Activated B cell treated with CpG ODN at 0.5 μM for 24 hours (primary cell): ENCODE measurements at regions of chr10 and their contacts with region 1.

Region 1: DNA sequence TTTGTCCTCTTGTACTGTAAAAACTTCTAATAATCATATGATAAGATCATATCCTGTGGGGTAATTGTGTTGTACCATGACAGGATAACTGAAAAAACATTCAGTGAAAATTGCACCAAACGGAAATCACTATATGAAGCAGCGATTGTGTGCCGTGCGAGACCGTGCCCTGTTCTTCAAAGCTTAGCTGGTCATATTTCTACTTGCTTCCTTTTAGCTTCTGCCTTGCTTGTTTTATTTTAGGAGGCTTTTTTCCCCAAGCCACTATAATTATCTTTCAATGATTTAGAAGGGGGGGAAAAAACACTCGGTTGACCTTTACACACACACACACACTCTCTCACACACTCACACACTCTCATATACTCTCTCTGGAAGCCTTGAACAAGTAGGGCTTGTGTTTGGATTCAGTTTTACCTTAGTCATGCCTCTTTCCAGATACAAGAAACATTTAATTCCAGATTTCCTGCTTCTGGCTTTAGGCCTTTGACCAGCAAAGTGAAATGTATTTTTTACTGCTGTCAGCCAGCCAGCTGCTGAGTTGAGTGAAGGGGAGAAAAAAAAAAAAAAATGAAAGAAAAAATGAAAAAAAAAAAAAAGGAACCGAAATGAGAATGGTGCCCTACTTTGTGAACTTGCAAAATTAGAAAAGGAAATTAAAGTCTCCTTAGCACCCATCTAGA is 181.4 kb downstream of the ARID5B start:
- DNase-seq: no peak
- ATAC-seq: peak; percentile 48
- H3K4me3 Mint-ChIP-seq: peak overlapping the region; percentile 65
- H3K27ac Mint-ChIP-seq: peak overlapping the region; percentile 96
- H3K4me1 Mint-ChIP-seq: peaks cover 86% of the 10 kb centered on the region
- H3K27me3 Mint-ChIP-seq: no peaks in the 10 kb centered on the region
- CTCF ChIP-seq: no peak

Region 2: GRCh38 chr10:61896854-61897661 is 185.8 kb before region 1 on chr10:
- CTCF ChIA-PET with region 1: interaction called, 5 read pairs
- POLR2A ChIA-PET with region 1: interaction called, 58 read pairs
- intact Hi-C with region 1: loop called (anchors 1 kb)
- DNase-seq: peak; percentile 43
- ATAC-seq: peak; percentile 71
- H3K4me3 Mint-ChIP-seq: peak overlapping the region; percentile 97
- H3K27ac Mint-ChIP-seq: peak overlapping the region; percentile 98
- H3K4me1 Mint-ChIP-seq: peaks cover 37% of the 10 kb centered on the region
- H3K27me3 Mint-ChIP-seq: no peaks in the 10 kb centered on the region
- CTCF ChIP-seq: no peak

Region 3: DNA sequence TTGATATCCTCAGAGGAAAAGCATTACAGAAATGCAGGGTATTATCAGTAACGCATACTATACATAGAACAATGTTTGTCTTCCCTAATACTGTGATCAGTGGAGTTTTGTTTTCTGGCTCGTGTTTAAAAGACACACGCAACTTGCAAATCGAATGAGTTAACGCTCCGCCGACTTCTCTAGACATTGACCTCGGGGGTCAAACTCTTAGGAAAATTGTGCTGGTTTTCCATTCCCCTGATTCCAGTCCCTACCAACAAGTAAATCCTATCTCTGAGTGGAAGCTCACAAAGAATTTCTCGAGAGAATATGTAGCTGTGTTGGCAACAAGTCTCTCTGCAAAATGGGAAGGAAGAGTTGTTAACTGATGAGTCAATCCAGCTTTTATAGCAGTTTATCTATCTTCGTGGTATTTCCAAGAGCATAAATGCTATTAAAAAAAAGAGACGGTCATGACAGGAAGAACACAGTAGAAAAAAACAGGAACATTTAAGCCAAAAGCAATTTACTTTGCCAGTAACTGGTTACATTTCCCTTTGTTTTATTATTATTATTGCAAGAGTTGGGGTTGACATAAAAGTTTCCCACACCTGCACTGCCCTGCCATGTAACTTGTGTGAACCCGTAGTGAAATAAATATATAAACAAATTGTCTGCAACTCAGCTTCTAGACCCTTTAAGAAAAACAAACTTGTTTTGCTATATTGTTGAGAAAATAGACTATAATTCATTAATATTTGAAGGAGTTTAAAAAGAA is 36.9 kb before region 1 on chr10:
- CTCF ChIA-PET with region 1: interaction called, 16 read pairs
- POLR2A ChIA-PET with region 1: interaction called, 100 read pairs
- intact Hi-C with region 1: loop called (anchors 1 kb)
- DNase-seq: no peak
- ATAC-seq: peak; percentile 4
- H3K4me3 Mint-ChIP-seq: peak overlapping the region; percentile 85
- H3K27ac Mint-ChIP-seq: peak overlapping the region; percentile 93
- H3K4me1 Mint-ChIP-seq: peaks cover 100% of the 10 kb centered on the region
- H3K27me3 Mint-ChIP-seq: no peaks in the 10 kb centered on the region
- CTCF ChIP-seq: no peak

Region 4: GRCh38 chr10:62069452-62070178 is 13.3 kb before region 1 on chr10:
- CTCF ChIA-PET with region 1: interaction called, 3 read pairs
- POLR2A ChIA-PET with region 1: interaction called, 6 read pairs
- intact Hi-C with region 1: loop called (anchors 1 kb)
- DNase-seq: no peak
- ATAC-seq: no peak
- H3K4me3 Mint-ChIP-seq: no peak overlapping the region
- H3K27ac Mint-ChIP-seq: peak overlapping the region; percentile 59
- H3K4me1 Mint-ChIP-seq: peaks cover 46% of the 10 kb centered on the region
- H3K27me3 Mint-ChIP-seq: no peaks in the 10 kb centered on the region
- CTCF ChIP-seq: no peak